ENCODE measurements at regions of chr11 and their contacts with region 1.

Region 1: DNA sequence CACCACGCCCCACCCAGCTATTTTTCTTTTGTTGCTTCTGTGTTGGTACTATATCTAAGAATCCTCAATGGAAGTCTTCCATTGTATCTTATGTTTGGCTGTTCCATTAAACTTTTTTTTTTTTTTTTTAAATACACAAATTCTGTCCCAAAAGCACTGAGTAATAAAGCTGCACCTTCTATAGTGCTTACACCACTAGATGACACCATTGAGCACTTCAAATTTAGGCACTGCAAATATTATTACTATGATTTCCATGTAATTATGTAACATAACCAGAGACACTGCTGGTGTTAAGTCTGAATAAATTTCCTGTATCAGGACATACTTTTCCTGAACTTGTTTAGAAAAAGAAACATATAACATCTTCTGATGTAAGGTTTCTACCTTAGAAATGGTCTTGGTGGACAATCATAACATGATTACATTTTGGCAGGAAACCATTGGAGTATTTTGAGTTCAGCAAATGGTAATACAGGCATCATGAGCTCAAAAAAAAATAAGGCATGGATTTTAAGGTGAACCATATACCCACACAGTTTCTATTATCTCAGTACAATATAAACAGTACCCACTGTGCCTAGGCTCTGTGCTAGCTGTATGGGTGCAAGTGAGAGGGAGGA is 110.5 kb downstream of the ATG16L2 start:
- DNase-seq: peak; percentile 65
- ATAC-seq: peak; percentile 73
- H3K4me3 ChIP-seq: no peak overlapping the region
- H3K27ac ChIP-seq: no peak overlapping the region
- H3K4me1 ChIP-seq: no peaks in the 10 kb centered on the region
- H3K27me3 ChIP-seq: no peaks in the 10 kb centered on the region
- CTCF ChIP-seq: peak; percentile 85

Region 2: GRCh38 chr11:72908032-72908676 is 16.5 kb before region 1 on chr11:
- CTCF ChIA-PET with region 1: no interaction called
- POLR2A ChIA-PET with region 1: no interaction called
- intact Hi-C with region 1: no loop called
- DNase-seq: no peak
- ATAC-seq: no peak
- H3K4me3 ChIP-seq: no peak overlapping the region
- H3K27ac ChIP-seq: no peak overlapping the region
- H3K4me1 ChIP-seq: no peaks in the 10 kb centered on the region
- H3K27me3 ChIP-seq: no peaks in the 10 kb centered on the region
- CTCF ChIP-seq: no peak

Region 3: DNA sequence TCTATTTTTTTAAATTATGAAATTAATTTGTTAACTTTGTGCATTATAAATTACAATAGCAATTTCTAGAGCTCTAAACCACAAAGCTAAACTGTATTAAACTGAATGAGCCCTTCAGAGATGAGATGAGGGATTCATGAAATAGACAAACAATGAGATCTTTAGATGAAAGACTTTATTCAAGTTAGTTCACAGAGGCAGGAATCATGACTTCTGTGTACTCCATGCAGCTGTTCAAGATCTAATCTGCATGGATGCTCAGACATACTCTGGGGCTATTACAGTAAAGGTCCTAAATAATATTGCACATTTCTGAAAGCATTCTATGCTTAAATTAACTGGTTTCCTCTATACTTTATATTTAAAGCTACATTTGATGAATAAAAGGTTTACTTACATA is 94.8 kb after region 1 on chr11:
- CTCF ChIA-PET with region 1: no interaction called
- POLR2A ChIA-PET with region 1: interaction called, 16 read pairs
- intact Hi-C with region 1: no loop called
- DNase-seq: no peak
- ATAC-seq: no peak
- H3K4me3 ChIP-seq: no peak overlapping the region
- H3K27ac ChIP-seq: no peak overlapping the region
- H3K4me1 ChIP-seq: no peaks in the 10 kb centered on the region
- H3K27me3 ChIP-seq: no peaks in the 10 kb centered on the region
- CTCF ChIP-seq: no peak

Region 4: DNA sequence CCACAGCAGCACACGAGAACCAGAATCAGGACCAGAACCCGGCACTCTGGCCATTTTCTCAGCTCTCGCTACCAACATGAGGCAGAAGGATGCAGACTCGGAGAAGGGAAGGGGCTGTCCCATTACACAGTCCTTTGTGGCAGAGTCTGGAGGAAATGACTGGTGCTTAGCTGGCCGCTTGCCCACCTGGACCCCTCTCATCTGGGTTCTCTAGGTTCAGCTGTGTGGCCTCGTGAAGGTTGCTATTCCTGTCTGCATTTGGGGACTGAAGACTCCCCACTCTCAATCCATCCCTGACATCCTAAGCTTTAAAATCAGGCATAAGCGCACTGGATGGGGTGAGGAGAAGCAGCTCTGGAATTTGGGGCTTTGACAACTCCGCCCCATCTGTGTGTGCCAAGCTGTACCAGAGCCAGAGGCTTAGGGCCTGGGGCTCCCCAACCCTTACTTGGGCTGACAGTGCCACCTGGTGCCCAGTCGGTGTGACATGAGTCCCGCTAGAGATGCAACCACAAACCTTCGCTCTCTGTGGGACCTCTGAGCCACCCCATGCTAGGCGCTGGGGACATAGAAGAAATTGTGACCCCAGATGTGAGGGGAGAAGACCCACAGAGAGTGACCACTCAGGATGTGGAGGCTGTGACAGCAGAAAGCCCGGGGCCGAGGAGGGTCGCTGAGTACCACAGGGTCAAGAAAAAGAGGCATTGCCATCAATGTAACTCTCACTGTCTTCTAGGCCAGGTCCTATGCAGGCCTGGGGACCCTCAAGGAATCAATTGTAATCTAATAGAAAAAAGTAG is 253.3 kb after region 1 on chr11:
- CTCF ChIA-PET with region 1: interaction called, 21 read pairs
- POLR2A ChIA-PET with region 1: no interaction called
- intact Hi-C with region 1: loop called (anchors 1 kb)
- DNase-seq: peak; percentile 92
- ATAC-seq: peak; percentile 88
- H3K4me3 ChIP-seq: no peak overlapping the region
- H3K27ac ChIP-seq: no peak overlapping the region
- H3K4me1 ChIP-seq: peaks cover 21% of the 10 kb centered on the region
- H3K27me3 ChIP-seq: no peaks in the 10 kb centered on the region
- CTCF ChIP-seq: peak; percentile 97

Region 5: DNA sequence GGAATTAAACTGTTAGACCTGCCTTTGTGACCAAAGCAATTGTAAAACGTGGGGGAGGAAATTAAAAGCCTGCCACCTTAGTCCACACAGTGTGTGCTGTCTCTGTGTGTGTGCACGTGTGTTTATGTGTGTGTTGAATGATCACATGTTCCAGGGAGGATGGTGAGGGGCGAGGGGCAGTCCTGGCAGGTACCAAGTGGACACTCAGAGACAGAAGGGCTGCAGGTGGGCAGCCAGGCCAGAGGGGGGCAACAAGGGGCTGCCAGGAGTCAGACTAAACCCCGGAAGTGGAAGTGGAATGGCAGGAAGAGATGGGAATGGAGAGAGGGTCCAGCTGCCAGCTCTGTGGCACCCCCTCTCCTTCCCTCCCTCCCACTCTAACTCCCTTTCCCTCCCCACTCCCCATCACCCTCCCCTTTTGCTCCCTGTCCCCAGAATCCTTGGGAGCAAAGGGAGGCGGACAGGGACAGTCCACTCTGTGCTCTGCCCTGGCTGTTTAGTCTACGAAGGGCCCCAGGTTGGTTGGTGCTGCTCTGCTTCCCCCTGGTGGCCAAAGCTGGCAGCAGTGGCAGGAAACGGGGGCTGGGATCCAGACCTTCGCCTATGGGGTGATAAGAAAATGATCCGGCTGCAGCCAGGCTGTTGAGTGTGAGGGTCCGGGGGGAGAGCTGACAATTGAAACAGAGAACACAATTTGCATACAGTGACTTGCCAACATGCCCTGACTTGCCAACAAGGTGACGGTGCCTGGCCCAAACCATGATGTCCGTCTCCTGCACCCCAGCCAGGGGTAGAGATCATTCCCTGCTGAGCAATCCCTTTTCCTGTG is 317.8 kb after region 1 on chr11:
- CTCF ChIA-PET with region 1: no interaction called
- POLR2A ChIA-PET with region 1: no interaction called
- intact Hi-C with region 1: loop called (anchors 5 kb)
- DNase-seq: peak; percentile 74
- ATAC-seq: peak; percentile 73
- H3K4me3 ChIP-seq: no peak overlapping the region
- H3K27ac ChIP-seq: no peak overlapping the region
- H3K4me1 ChIP-seq: peaks cover 22% of the 10 kb centered on the region
- H3K27me3 ChIP-seq: no peaks in the 10 kb centered on the region
- CTCF ChIP-seq: peak; percentile 95

Region 6: GRCh38 chr11:73288873-73289707 is 364.4 kb after region 1 on chr11:
- CTCF ChIA-PET with region 1: no interaction called
- POLR2A ChIA-PET with region 1: no interaction called
- intact Hi-C with region 1: loop called (anchors 10 kb)
- DNase-seq: peak; percentile 82
- ATAC-seq: peak; percentile 79
- H3K4me3 ChIP-seq: peak overlapping the region; percentile 19; the same call in 1 of the 2 replicates
- H3K27ac ChIP-seq: peak overlapping the region; percentile 41
- H3K4me1 ChIP-seq: peaks cover 11% of the 10 kb centered on the region
- H3K27me3 ChIP-seq: no peaks in the 10 kb centered on the region
- CTCF ChIP-seq: peak; percentile 99

Region 7: GRCh38 chr11:74069147-74070047 is 1144.7 kb after region 1 on chr11:
- CTCF ChIA-PET with region 1: no interaction called
- POLR2A ChIA-PET with region 1: no interaction called
- intact Hi-C with region 1: no loop called
- DNase-seq: peak; percentile 95
- ATAC-seq: peak; percentile 5; the same call in 1 of the 2 replicates
- H3K4me3 ChIP-seq: no peak overlapping the region; the same call in 1 of the 2 replicates
- H3K27ac ChIP-seq: peak overlapping the region; percentile 90
- H3K4me1 ChIP-seq: peaks cover 59% of the 10 kb centered on the region
- H3K27me3 ChIP-seq: no peaks in the 10 kb centered on the region
- CTCF ChIP-seq: no peak